Common myeloid progenitor, CD34-positive (primary cell): ENCODE measurements at regions of chr17 and their contacts with region 1.

Region 1: DNA sequence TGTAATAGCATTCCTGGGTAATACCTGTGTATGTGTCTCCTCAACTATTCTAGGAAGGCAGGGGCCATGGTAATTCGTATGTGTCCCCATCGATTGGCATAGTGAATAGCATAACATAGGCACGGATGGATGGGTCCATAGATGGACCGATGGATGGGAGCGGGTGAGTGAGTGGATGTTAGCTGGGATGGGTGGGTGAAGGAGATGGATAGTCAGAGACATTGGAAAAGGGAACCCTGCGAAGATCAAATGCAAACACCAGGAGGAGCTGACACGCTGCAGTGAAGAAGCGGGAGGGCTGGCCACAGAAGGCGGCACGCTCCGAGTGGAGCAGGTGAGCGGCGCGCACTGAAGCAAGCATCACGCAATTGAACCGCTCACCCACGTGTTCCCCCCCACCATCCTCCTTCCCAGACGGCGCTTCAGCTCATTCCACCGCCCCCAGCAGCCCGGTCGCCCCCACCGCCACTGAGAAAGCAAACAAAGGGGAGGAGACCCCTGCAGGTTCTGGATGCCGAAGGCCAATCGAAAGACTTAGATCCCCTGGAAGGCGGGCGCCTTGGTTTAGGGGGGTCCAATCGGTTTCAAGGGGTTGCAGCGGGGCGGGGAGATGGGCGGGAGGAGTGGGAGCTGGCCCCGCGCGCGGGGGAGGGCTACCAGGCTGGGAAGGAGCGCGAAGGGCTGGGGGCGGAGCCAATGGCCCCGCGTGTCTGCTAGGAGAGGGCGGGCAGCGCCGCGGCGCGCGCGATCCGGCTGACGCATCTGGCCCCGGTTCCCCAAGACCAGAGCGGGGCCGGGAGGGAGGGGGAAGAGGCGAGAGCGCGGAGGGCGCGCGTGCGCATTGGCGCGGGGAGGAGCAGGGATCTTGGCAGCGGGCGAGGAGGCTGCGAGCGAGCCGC is at the start of gene ARRB2:
- DNase-seq: peak; percentile 99 to 100 (median 100)
- H3K4me3 ChIP-seq: peak within 1 kb of the TSS; percentile 40 to 89 (median 72)
- H3K27ac ChIP-seq: peak within 1 kb of the TSS in 1 of 2 experiments; percentile 43
- H3K4me1 ChIP-seq: peaks cover 9 to 48% (median 42%) of the 10 kb centered on the region in 4 experiments
- H3K27me3 ChIP-seq: no peaks in the 10 kb centered on the region

Region 2: GRCh38 chr17:4881761-4882555 is 171.9 kb after region 1 on chr17:
- CTCF ChIA-PET with region 1: interaction called, 20 read pairs
- POLR2A ChIA-PET with region 1: no interaction called
- DNase-seq: peak; percentile 38 to 51 (median 50)
- H3K4me3 ChIP-seq: no peak overlapping the region
- H3K27ac ChIP-seq: no peak overlapping the region
- H3K4me1 ChIP-seq: no peaks in the 10 kb centered on the region
- H3K27me3 ChIP-seq: no peaks in the 10 kb centered on the region

Region 3: DNA sequence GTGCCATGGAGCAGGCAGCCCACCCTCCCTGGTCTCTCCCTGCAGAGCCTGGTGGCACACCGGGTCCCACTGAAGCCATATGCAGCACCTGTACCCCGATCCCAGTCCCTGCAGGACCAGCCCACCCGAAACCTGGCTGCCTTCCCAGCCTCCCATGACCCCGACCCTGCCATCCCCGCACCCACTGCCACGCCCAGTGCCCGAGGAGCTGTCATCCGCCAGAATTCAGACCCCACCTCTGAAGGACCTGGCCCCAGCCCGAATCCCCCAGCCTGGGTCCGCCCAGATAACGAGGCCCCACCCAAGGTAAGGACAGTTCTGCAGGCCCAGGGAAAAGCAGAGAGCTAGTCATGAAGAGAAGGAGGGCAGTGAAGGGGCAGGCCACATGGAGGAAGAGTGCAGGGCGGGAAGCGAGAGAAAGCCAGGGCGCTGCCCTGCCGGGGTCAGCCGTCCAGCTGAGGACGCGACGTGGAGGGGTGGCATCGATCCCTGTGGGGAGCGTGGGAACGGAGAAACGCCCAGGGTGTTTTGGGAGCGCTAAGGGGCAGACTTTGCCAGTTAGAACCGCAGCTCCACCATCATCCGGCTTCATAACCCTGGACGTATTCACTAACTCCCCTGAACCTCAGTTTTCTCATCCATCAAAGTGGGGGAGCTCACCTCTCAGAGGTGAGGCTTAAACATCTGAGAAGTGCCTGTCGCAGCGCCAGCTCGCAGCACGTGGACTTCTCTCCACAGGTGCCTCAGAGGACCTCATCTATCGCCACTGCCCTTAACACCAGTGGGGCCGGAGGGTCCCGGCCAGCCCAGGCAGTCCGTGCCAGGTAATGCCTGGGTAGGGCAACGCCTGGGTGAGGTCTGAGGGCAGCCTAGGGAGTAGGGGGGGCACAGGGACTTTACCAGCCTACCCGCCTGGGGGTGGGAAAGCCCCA is 181.6 kb after region 1 on chr17:
- CTCF ChIA-PET with region 1: interaction called, 20 read pairs
- POLR2A ChIA-PET with region 1: no interaction called
- DNase-seq: no peak
- H3K4me3 ChIP-seq: no peak overlapping the region
- H3K27ac ChIP-seq: no peak overlapping the region
- H3K4me1 ChIP-seq: no peaks in the 10 kb centered on the region
- H3K27me3 ChIP-seq: no peaks in the 10 kb centered on the region